ENCODE measurements at regions of chr13 and their contacts with region 1.

Region 1: GRCh38 chr13:97295283-97296182 is 73.4 kb downstream of the MBNL2 start:
- DNase-seq: no peak
- H3K4me3 ChIP-seq: no peak overlapping the region
- H3K27ac ChIP-seq: peak overlapping the region in 1 of 2 donors; percentile 29
- H3K4me1 ChIP-seq: peaks cover 0 to 15% of the 10 kb centered on the region in 2 donors
- H3K27me3 ChIP-seq: no peaks in the 10 kb centered on the region
- CTCF ChIP-seq: no peak

Region 2: GRCh38 chr13:97339019-97339987 is 43.8 kb after region 1 on chr13:
- intact Hi-C with region 1: loop called (anchors 5 kb)
- DNase-seq: peak in 1 of 2 donors; percentile 85
- H3K4me3 ChIP-seq: peak overlapping the region in 1 of 2 donors; percentile 41
- H3K27ac ChIP-seq: peak overlapping the region; percentile 79 to 83
- H3K4me1 ChIP-seq: peaks cover 0 to 27% of the 10 kb centered on the region in 2 donors
- H3K27me3 ChIP-seq: no peaks in the 10 kb centered on the region
- CTCF ChIP-seq: no peak

Measured in ascending aorta (tissue), 2 donors.